Calu3 (cell line): ENCODE measurements at regions of chr1 and their contacts with region 1.

Region 1: GRCh38 chr1:26787706-26788514 is at the start of gene PIGV:
- DNase-seq: peak; percentile 85
- H3K4me3 Mint-ChIP-seq: peak within 1 kb of the TSS; percentile 90
- H3K27ac Mint-ChIP-seq: peak within 1 kb of the TSS; percentile 93
- H3K4me1 Mint-ChIP-seq: peaks cover 39% of the 10 kb centered on the region
- H3K27me3 Mint-ChIP-seq: no peaks in the 10 kb centered on the region
- CTCF ChIP-seq: no peak
- total RNA-seq, gene PIGV: 9.9 and 11.9 TPM in 2 replicates

Region 2: DNA sequence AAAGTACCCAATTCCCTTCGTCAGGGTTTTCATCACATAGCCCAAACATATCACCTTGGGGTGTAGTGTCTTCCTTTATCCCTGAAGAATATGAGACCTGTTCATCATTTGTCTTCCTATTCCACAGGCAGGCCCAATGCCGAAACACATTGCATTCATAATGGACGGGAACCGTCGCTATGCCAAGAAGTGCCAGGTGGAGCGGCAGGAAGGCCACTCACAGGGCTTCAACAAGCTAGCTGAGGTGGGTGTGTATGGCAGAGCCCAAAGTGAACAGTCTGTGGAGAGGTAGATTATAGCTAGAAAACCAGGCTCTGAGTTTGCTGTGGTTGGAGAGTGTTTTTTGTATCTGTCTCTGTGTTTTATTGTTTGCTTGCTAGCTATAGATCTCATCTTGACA is 349.9 kb before region 1 on chr1:
- CTCF ChIA-PET with region 1: no interaction called
- intact Hi-C with region 1: no loop called
- DNase-seq: no peak
- H3K4me3 Mint-ChIP-seq: no peak overlapping the region
- H3K27ac Mint-ChIP-seq: no peak overlapping the region
- H3K4me1 Mint-ChIP-seq: no peaks in the 10 kb centered on the region
- H3K27me3 Mint-ChIP-seq: no peaks in the 10 kb centered on the region
- CTCF ChIP-seq: no peak

Region 3: GRCh38 chr1:26602378-26602959 is 185.4 kb before region 1 on chr1:
- CTCF ChIA-PET with region 1: interaction called, 10 read pairs
- intact Hi-C with region 1: loop called (anchors 1 kb)
- DNase-seq: peak; percentile 45
- H3K4me3 Mint-ChIP-seq: no peak overlapping the region
- H3K27ac Mint-ChIP-seq: no peak overlapping the region
- H3K4me1 Mint-ChIP-seq: no peaks in the 10 kb centered on the region
- H3K27me3 Mint-ChIP-seq: no peaks in the 10 kb centered on the region
- CTCF ChIP-seq: peak; percentile 47

Region 4: DNA sequence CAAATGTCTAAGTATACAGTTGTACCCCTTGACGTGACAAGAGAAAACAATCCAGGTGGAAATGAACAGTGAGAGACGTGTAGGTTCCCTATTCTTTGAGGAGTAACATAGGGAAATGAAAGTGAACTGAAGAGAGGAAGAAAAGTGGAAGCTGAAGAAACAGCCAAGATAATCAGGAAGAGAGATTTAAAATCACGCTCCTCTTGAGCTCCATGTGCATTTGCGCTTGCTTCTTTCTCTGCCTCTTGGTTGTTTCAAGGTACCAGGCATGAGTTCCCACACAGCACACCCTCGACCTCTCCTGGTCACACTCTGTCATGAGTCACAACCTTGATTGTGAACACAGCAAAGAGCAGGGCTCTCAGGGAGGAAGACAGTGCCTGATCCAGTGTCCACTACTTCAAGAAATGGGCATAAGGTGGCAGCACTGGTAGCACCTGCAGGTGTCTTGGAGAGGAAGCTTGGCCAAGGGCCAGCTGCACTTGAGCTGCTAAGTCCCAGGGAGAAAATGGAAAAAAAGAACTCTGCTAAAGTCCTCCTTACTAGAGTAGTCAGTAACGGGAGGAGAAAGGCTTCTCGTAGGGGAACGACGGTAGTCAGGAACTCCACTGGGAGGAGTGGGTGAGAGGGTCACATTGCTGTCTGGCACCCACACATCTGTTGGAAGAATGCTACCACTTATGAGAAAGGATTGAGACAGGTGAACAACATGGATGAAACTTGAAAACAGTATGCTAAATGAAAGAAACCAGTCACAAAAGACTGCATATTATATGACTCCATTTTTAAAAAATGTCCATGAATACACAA is 110.4 kb before region 1 on chr1:
- CTCF ChIA-PET with region 1: interaction called, 23 read pairs
- intact Hi-C with region 1: no loop called
- DNase-seq: peak; percentile 84
- H3K4me3 Mint-ChIP-seq: peak overlapping the region; percentile 20
- H3K27ac Mint-ChIP-seq: no peak overlapping the region
- H3K4me1 Mint-ChIP-seq: peaks cover 11% of the 10 kb centered on the region
- H3K27me3 Mint-ChIP-seq: no peaks in the 10 kb centered on the region
- CTCF ChIP-seq: peak; percentile 58

Region 5: DNA sequence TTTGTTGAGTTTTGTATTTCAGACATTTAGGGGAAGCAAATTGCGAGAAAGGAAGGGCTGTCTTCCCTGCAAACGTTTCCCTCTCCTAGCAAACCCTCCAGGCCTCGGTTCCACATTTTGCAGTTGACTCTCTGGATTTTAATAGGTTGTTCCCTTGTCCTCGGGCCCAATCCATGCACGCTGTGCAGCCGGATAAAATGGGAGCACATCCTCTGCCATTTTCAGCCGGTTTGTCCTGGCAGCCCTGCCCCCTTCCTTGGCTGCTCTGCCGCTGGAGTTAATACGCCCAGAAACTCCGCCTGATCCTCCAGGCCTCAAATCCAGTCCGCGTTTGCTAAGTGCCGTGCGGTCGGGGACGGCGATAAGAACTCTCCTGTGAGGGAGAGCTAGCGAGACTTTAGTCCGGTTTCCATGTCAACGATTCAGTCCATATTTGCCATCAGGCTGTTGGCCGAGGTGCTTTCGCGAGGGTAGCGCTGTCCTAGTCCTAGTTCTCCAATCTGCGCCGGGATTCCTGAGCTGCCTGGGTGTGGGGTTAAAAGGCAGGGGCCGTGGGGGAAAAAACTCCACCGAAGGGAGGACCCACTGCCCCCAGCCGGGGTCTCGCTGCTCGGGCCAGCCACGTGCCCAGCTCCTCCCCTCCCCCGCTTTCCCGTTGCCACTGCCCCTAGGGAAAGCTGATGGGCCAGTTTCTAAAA is 95.0 kb before region 1 on chr1:
- CTCF ChIA-PET with region 1: interaction called, 18 read pairs
- intact Hi-C with region 1: no loop called
- DNase-seq: peak; percentile 88
- H3K4me3 Mint-ChIP-seq: peak overlapping the region; percentile 79
- H3K27ac Mint-ChIP-seq: peak overlapping the region; percentile 89
- H3K4me1 Mint-ChIP-seq: peaks cover 22% of the 10 kb centered on the region
- H3K27me3 Mint-ChIP-seq: no peaks in the 10 kb centered on the region
- CTCF ChIP-seq: no peak

Region 6: GRCh38 chr1:26705788-26706311 is 82.1 kb before region 1 on chr1:
- CTCF ChIA-PET with region 1: interaction called, 6 read pairs
- intact Hi-C with region 1: loop called (anchors 2 kb)
- DNase-seq: peak; percentile 9
- H3K4me3 Mint-ChIP-seq: peak overlapping the region; percentile 57
- H3K27ac Mint-ChIP-seq: peak overlapping the region; percentile 83
- H3K4me1 Mint-ChIP-seq: peaks cover 15% of the 10 kb centered on the region
- H3K27me3 Mint-ChIP-seq: no peaks in the 10 kb centered on the region
- CTCF ChIP-seq: no peak